Gastrocnemius medialis (tissue), 4 donors: ENCODE measurements at regions of chr9 and their contacts with region 1.

Region 1: GRCh38 chr9:127770905-127771569 is 7.4 kb downstream of the SH2D3C start:
- DNase-seq: peak; percentile 96 to 97
- ATAC-seq: peak; percentile 93 to 94
- H3K4me3 ChIP-seq: peak overlapping the region; percentile 58 to 69 (median 66)
- H3K27ac ChIP-seq: peak overlapping the region; percentile 56 to 81 (median 76)
- H3K4me1 ChIP-seq: peaks cover 11 to 18% of the 10 kb centered on the region in 2 donors
- H3K27me3 ChIP-seq: no peaks in the 10 kb centered on the region
- CTCF ChIP-seq: peak in 1 of 5 experiments; percentile 15
- POLR2A ChIP-seq: peak in 1 of 2 donors; percentile 66

Region 2: DNA sequence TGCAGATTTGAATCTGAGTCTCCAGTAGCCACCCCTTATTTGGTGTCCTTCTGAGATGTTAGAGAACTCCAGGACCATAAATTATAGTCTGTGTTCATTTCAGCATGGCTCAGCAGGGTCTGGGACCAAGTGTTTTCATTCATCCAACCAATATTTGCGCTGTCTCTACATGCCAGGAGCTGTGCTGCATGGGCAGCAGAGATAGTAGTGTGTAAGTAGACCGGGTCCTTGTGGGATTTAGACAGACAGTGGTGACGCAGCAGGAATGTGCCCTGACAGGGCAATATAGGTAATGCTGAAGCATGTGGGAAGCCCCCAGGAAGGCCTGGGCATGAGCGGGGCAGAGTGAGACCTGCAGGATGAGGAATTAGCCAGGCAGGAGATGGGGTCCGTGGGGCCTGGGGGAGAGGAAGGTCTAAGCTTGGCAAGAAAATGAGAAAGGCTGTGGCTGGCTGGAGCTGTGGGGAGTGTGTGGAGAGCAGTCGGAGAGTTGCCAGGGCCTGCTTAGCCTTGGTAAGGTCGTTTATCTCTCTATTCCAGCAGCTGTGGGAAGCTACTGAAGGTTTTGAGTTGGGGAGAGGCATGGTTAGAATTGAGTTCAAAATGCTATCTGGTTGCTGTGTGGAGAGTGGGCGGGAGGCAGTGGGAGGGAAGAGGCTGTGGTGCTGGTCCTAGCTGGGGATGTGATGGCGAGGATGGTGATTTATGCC is 142.1 kb before region 1 on chr9:
- in situ Hi-C with region 1: no loop called
- intact Hi-C with region 1: no loop called
- DNase-seq: no peak
- ATAC-seq: no peak
- H3K4me3 ChIP-seq: no peak overlapping the region
- H3K27ac ChIP-seq: no peak overlapping the region
- H3K4me1 ChIP-seq: peaks cover 14 to 22% of the 10 kb centered on the region in 2 donors
- H3K27me3 ChIP-seq: no peaks in the 10 kb centered on the region
- CTCF ChIP-seq: no peak
- POLR2A ChIP-seq: no peak

Region 3: GRCh38 chr9:127676636-127677035 is 94.4 kb before region 1 on chr9:
- in situ Hi-C with region 1: no loop called
- intact Hi-C with region 1: no loop called
- DNase-seq: peak in 1 of 2 donors; percentile 28
- ATAC-seq: peak; percentile 86 to 89
- H3K4me3 ChIP-seq: no peak overlapping the region
- H3K27ac ChIP-seq: peak overlapping the region in 2 of 4 donors; percentile 18 to 46
- H3K4me1 ChIP-seq: peaks cover 0 to 2% of the 10 kb centered on the region in 2 donors
- H3K27me3 ChIP-seq: no peaks in the 10 kb centered on the region
- CTCF ChIP-seq: no peak
- POLR2A ChIP-seq: no peak

Region 4: GRCh38 chr9:127694890-127695720 is 75.9 kb before region 1 on chr9:
- in situ Hi-C with region 1: no loop called
- intact Hi-C with region 1: no loop called
- DNase-seq: no peak
- ATAC-seq: no peak
- H3K4me3 ChIP-seq: no peak overlapping the region
- H3K27ac ChIP-seq: no peak overlapping the region
- H3K4me1 ChIP-seq: peaks cover 5 to 11% of the 10 kb centered on the region in 2 donors
- H3K27me3 ChIP-seq: no peaks in the 10 kb centered on the region
- CTCF ChIP-seq: no peak
- POLR2A ChIP-seq: no peak

Region 5: DNA sequence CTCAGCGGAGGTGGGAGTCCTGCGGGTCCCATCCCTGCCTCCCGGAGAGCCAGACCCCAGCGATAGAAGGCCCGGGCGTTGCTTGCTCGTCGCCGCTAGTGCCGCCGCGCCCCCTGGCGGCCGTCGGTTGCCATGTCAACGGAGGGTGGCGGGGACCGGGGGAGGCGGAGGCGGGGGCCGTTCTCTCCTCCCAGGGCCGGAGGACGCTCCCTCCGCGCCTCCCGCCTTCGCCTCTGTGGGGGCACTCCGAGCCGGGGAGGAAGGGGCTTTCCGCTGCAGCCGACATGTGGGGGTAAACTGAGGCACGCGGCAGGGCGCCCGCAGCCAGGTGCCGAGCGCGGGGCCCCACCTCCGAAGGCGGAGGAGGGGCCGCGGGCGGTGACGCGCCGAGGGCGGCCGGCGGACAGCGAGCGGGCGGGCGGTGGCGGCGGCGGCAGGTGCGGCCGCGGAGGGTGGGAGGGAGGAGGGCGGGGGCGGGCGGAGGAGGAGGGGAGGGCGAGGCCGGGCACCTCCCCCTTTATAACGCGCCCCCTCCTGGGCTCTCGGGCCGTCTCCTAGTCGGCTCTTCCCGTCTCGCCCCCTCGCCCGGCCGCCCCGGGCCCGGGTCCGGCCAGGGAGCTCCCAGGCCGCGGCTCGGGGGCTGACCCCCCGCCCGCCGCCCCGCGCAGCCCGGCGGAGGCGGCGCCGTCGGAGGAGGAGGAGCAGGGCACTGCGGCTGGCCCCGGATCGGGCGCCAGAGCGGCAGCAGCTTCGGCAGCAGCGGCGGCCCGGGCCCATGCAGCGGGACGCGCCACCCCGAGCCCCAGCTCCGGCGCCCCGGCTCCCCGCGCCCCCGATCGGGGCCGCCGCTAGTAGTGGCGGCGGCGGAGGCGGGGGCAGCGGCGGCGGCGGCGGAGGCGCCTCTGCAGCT is 14.2 kb after region 1 on chr9:
- in situ Hi-C with region 1: no loop called
- intact Hi-C with region 1: loop called (anchors 1 kb)
- DNase-seq: peak; percentile 73 to 84
- ATAC-seq: peak; percentile 80
- H3K4me3 ChIP-seq: peak overlapping the region; percentile 59 to 100 (median 92)
- H3K27ac ChIP-seq: peak overlapping the region; percentile 89 to 98 (median 96)
- H3K4me1 ChIP-seq: peaks cover 7 to 12% of the 10 kb centered on the region in 2 donors
- H3K27me3 ChIP-seq: no peaks in the 10 kb centered on the region
- CTCF ChIP-seq: peak; percentile 79 to 99 (median 99)
- POLR2A ChIP-seq: no peak

Region 6: DNA sequence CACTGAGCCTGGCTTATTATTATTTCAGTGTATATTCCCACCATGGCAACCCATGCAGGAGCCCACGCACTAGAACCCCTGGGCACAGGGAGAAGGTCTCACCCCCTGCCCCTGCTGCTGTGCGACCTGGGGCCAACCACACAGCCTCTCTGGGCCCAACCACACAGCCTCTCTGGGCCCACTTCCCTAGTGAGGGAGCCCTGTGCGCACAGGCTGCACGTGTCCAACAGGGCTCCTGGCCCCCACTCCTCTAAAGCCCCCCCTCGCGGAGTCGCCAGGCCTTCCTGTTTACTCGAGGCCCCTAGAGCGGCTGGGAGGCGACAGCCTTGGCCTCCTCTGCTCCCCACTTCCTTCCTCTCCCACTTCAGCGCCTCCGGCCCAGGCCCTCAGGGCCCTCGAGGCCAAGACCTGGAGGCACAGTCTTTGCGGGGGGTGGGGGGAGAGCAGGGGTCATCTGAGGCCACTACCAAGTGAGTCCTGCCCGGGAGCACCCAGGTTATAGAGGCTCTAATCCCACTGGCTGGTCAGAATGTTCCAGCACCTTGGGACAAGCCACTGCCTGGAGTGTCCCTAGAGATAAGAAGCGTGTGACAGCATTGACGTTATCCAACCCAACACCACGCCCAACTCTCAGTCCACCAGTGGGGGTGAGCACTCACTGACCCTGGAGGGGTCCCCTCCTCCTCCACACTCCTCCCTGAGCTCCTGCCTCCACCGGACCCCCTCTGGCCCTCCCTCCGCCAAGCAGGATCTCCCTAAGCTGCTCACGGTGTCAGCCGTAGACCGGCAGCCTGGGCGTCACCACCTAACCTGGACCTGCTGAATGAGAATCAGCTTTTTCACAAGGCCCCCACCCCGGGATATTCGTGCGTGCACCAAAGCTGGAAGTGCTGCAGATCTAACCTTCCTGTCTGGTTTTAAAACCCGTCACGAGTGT is 91.3 kb after region 1 on chr9:
- in situ Hi-C with region 1: no loop called
- intact Hi-C with region 1: no loop called
- DNase-seq: peak; percentile 61 to 68
- ATAC-seq: peak; percentile 55 to 79
- H3K4me3 ChIP-seq: no peak overlapping the region
- H3K27ac ChIP-seq: peak overlapping the region; percentile 67 to 80 (median 74)
- H3K4me1 ChIP-seq: peaks cover 35 to 47% of the 10 kb centered on the region in 2 donors
- H3K27me3 ChIP-seq: no peaks in the 10 kb centered on the region
- CTCF ChIP-seq: no peak
- POLR2A ChIP-seq: no peak